Posterior vena cava (tissue), 2 donors: ENCODE measurements at regions of chr7 and their contacts with region 1.

Region 1: GRCh38 chr7:105853931-105854419 is 22.4 kb downstream of the ATXN7L1 start:
- DNase-seq: no peak

Region 2: DNA sequence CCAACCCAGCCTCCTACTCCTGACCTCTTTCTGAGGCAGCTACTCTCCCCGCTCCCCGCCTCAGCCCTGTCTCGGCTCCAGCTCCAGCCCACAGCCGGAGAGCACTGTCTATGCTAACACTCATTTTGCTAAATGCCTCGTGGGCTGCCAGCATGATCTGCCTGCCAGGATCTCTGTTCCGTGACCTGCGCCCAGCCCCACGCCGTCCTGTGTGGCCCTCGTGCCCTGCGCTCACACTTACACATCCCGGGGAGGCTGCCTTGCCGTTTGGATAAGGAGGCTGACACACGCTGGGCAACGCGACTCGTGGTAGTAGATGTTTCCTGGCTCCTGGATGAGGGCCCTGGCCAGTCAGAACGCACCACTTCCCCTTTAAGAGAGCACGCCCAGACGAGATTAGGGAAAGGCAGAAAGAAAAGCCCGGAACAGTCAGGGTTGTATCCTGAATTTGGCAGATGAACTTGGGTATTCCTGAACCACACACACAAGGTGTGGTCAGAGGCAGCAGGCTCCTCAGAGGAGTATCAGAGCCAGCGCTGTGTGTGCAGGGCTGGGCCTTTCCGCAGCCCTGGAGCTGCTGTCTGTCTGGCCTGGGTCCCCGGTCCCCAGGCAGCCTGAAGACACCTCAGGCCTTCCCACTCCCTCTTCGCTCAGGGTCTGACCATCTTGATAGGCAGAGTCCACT is 175.0 kb before region 1 on chr7:
- intact Hi-C with region 1: loop called in 1 of 2 experiments (anchors 10 kb)
- DNase-seq: peak; percentile 94

Region 3: GRCh38 chr7:105816266-105816828 is 37.6 kb before region 1 on chr7:
- intact Hi-C with region 1: no loop called
- DNase-seq: no peak

Region 4: GRCh38 chr7:105830391-105831301 is 23.3 kb before region 1 on chr7:
- intact Hi-C with region 1: no loop called
- DNase-seq: no peak

Region 5: DNA sequence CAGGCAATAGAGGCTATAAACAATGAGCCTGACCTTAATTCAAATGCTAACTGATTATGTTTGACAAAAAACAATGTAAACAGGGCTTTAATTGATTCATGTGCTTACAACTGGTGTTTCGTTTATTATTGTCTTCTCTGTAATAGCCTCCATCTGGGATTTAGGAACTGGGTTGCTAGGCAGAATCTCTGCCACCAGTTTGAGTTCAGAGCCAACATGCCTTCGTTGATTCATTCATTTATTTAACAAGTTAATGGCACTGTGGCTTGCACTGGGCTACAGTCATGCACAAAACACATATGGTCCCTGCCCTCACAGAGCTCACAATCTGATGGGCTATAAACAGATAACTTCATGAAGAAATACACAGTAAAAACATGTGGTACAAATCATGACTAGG is 89.5 kb after region 1 on chr7:
- intact Hi-C with region 1: no loop called
- DNase-seq: no peak